CD14-positive monocyte (primary cell): ENCODE measurements at regions of chr17 and their contacts with region 1.

Region 1: DNA sequence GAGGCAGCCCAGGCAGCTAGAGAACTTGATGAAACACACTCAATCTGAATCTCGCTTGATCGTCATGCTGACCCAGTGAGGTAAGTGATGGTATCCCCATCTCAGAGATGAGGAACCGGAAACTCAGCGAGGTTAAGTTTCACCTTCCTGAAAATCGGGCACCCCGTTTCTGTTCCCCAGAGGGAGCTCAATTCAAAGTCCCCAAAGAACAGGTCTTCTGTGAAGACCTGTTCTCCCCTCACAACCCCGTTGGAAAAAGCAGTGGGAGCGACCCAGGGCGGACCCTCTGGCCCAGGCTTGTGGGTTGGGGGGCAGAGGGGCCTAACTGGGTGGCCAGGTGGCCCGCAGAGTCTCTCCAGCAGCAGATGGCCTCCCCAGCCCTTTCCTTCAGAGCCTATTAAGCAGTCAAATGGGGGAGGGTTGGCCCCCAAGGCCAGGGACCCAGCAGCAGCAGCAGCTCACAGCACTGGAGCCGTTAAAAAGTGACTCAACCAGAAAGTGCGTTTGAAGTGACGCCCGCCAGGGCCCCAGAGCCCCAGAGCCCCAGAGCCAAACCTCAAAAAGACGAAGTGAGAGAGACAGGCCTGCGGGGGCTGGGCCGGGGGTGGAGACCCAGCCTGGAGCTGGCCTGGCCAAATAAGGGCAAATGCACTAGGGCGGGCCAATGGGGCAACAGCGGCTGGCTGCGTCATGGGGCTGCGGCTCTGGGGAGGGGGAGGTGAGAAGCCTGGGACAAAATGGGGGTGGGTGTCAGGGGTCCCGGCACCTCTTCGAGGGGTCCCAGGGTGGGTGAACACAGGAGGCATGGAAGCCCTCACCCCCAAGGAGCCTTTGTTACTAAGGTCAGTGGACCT is 9.2 kb upstream of the TSPOAP1 start:
- DNase-seq: peak; percentile 93 to 94 (median 94)
- H3K4me3 ChIP-seq: peak overlapping the region; percentile 42 to 100 (median 48)
- H3K4me3 Mint-ChIP-seq: peak overlapping the region; percentile 90 to 100
- H3K27ac ChIP-seq: peak overlapping the region; percentile 98 to 100
- H3K27ac Mint-ChIP-seq: peak overlapping the region; percentile 99 to 100 (median 99)
- H3K4me1 ChIP-seq: peaks cover 95 to 100% of the 10 kb centered on the region in 2 donors
- H3K4me1 Mint-ChIP-seq: peaks cover 87% of the 10 kb centered on the region
- H3K27me3 ChIP-seq: no peaks in the 10 kb centered on the region
- H3K27me3 Mint-ChIP-seq: peaks cover 0 to 2% (median 0%) of the 10 kb centered on the region in 3 donors
- CTCF ChIP-seq: no peak

Region 2: DNA sequence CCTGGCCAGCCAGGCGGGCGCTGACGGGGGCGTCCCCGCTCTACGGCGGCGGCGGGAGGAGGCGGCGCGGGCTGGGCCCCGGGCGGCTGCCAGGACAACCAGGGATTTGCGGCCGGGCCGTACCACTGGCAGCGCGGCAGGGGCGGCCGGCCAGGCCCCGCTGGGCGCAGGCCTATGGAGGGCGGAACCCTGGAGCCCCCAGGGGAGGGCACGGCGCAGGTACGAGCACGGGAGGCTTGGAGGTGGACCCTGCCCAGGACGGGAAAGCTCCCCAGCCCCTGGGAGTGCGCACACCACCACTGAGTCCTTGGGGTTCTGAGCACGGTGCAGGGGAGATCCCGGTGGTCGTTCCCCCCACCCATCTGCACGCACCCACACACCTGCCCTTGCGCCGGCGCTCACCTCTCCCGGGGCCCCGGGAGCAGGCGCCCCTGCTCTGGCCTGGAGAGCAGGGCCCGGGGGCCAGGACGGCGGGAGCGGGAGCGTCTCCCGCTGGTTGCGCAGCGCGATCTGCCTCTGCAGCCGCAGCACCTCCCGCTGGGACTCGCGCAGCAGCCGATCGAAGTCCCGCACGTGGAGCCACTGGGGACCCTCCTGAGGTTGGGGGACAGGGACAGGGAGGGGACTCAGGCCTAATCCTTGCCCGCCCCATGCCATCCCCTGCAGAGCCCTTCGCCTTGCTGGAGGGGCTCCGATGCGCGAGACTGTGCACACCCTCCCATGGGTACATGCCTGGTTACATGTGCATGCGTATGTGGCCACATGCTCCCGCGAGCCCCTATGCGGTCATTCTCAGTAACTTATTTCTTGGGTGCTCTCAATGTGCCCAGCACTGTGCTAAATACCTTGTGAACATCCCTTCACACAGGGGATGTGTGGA is 13.2 kb before region 1 on chr17:
- intact Hi-C with region 1: no loop called
- DNase-seq: peak in 1 of 3 donors; percentile 9
- H3K4me3 ChIP-seq: peak overlapping the region; percentile 10 to 63 (median 17)
- H3K4me3 Mint-ChIP-seq: peak overlapping the region; percentile 31 to 82
- H3K27ac ChIP-seq: no peak overlapping the region
- H3K27ac Mint-ChIP-seq: peak overlapping the region in 1 of 7 donors; percentile 66
- H3K4me1 ChIP-seq: peaks cover 56 to 57% of the 10 kb centered on the region in 2 donors
- H3K4me1 Mint-ChIP-seq: peaks cover 54% of the 10 kb centered on the region
- H3K27me3 ChIP-seq: peaks cover 11 to 38% of the 10 kb centered on the region in 2 donors
- H3K27me3 Mint-ChIP-seq: peaks cover 46 to 59% (median 49%) of the 10 kb centered on the region in 3 donors
- CTCF ChIP-seq: no peak

Region 3: DNA sequence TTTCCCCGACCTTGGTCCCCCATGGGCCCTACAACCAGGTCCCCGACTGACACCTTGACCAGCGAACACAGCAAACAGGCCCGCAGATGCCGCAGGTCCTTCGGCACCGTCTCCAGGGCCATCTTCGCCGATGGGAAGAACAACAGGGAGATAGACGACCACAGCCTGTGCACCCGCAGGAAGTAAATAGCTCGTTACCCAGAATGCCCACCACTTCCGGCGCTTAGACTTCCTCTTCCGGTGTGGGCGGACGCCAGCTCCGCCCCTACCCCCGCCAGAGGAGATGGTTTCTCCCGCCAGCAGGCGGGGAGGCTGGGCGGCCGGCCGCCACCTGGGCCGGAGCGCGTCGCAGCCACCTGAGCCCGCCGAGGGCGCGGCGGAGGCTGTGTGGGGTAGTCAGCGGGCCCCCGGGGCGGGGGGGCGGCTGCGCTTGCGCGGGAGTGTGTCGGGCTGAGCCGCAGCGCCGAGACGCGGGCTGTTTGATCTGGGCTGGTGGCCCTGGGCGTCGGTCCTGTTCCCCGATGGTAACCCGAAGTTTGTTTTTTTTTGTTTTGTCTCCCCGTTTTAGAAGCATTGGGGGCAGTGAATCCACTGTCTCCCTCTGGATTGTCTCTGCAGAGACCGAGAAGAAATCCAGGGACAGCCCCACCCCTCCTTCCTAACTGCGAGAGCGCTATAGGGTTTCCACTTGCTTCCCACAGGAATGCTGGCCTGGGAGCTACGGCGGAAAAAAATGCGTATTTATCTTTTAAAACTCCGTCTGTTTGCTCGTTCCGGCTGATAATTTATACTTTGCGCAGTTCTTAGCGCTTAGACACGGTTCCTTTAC is 14.4 kb after region 1 on chr17 and contains the start of gene SUPT4H1:
- intact Hi-C with region 1: loop called in 1 of 2 experiments (anchors 2 kb)
- DNase-seq: peak; percentile 91 to 92 (median 92)
- H3K4me3 ChIP-seq: peak within 1 kb of the TSS; percentile 79 to 97 (median 94)
- H3K4me3 Mint-ChIP-seq: peak within 1 kb of the TSS; percentile 100
- H3K27ac ChIP-seq: peak within 1 kb of the TSS; percentile 89 to 95
- H3K27ac Mint-ChIP-seq: peak within 1 kb of the TSS; percentile 98 to 100 (median 99)
- H3K4me1 ChIP-seq: peaks cover 25 to 38% of the 10 kb centered on the region in 2 donors
- H3K4me1 Mint-ChIP-seq: peaks cover 44% of the 10 kb centered on the region
- H3K27me3 ChIP-seq: no peaks in the 10 kb centered on the region
- H3K27me3 Mint-ChIP-seq: peaks cover 0 to 2% (median under 1%) of the 10 kb centered on the region in 3 donors
- CTCF ChIP-seq: no peak
- polyA plus RNA-seq, gene SUPT4H1: 144 to 251 (median 241) TPM

Region 4: GRCh38 chr17:58621174-58621573 is 283.3 kb after region 1 on chr17:
- intact Hi-C with region 1: no loop called
- DNase-seq: no peak
- H3K4me3 ChIP-seq: no peak overlapping the region
- H3K4me3 Mint-ChIP-seq: no peak overlapping the region
- H3K27ac ChIP-seq: no peak overlapping the region
- H3K27ac Mint-ChIP-seq: no peak overlapping the region
- H3K4me1 ChIP-seq: peaks cover 0 to under 1% of the 10 kb centered on the region in 2 donors
- H3K4me1 Mint-ChIP-seq: peaks cover 6% of the 10 kb centered on the region
- H3K27me3 ChIP-seq: no peaks in the 10 kb centered on the region
- H3K27me3 Mint-ChIP-seq: peaks cover 0 to 2% (median 1%) of the 10 kb centered on the region in 3 donors
- CTCF ChIP-seq: no peak